Transverse colon (tissue), 4 donors: ENCODE measurements at regions of chr5 and their contacts with region 1.

Region 1: GRCh38 chr5:11724893-11725292 is 179.4 kb downstream of the CTNND2 start:
- DNase-seq: no peak
- H3K4me3 ChIP-seq: no peak overlapping the region
- H3K27ac ChIP-seq: no peak overlapping the region
- H3K4me1 ChIP-seq: no peaks in the 10 kb centered on the region
- H3K27me3 ChIP-seq: no peaks in the 10 kb centered on the region
- CTCF ChIP-seq: no peak
- EP300 ChIP-seq: no peak
- POLR2A ChIP-seq: no peak

Region 2: DNA sequence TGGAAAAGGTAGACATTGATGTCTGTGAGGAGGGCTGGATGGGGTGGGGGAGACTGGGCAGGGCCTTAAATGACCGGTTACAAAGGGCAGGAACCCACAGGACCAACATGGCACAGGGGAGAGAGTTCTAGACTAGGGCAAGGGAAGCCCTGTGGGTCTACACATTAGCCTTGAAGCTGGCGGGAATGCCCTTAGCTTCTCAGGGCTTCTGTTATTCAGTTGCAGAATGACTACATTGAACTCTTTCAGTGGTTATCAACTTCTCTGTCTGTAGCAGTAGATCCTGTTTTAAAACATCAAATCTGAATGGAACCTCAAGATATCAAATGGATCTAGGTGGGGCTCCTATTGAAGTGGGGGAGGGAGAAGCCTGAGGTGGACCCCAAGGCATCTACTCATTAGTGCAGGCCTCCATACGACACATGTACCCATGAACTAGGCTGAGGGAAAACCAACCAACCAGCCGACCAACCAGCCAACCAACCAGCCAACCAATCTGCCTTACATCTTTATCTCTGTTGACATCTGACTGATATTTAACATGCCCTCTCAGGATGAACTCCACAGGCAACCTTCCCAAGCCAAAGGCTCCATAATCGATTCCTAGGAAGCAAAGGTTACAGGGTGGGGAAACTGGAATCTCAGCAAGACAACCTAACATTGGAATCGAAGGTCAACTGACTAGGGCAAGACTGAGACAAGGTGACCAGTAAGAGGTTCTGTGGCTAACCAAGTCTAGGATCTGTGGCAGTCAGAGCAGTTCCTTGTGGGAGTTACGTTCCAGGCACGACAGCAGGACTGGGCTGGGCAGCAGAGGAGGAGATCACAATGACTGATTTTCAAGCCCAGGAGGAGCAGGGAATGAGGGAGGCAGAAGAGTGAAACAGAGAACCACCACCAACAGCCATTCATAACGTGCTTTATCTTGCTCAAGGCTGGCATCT is 1012.0 kb before region 1 on chr5:
- in situ Hi-C with region 1: no loop called
- intact Hi-C with region 1: loop called (anchors 5 kb)
- DNase-seq: no peak
- H3K4me3 ChIP-seq: no peak overlapping the region
- H3K27ac ChIP-seq: no peak overlapping the region
- H3K4me1 ChIP-seq: no peaks in the 10 kb centered on the region
- H3K27me3 ChIP-seq: no peaks in the 10 kb centered on the region
- CTCF ChIP-seq: no peak
- EP300 ChIP-seq: no peak
- POLR2A ChIP-seq: no peak